Cardiac septum (tissue), 1 donor: ENCODE measurements at regions of chr1 and their contacts with region 1.

Region 1: GRCh38 chr1:230066466-230067404 is at the start of gene GALNT2:
- DNase-seq: peak; percentile 93
- total RNA-seq, gene GALNT2: 29.3 TPM

Region 2: GRCh38 chr1:229661022-229661877 is 405.5 kb before region 1 on chr1:
- intact Hi-C with region 1: loop called (anchors 10 kb)
- DNase-seq: peak; percentile 91

Region 3: DNA sequence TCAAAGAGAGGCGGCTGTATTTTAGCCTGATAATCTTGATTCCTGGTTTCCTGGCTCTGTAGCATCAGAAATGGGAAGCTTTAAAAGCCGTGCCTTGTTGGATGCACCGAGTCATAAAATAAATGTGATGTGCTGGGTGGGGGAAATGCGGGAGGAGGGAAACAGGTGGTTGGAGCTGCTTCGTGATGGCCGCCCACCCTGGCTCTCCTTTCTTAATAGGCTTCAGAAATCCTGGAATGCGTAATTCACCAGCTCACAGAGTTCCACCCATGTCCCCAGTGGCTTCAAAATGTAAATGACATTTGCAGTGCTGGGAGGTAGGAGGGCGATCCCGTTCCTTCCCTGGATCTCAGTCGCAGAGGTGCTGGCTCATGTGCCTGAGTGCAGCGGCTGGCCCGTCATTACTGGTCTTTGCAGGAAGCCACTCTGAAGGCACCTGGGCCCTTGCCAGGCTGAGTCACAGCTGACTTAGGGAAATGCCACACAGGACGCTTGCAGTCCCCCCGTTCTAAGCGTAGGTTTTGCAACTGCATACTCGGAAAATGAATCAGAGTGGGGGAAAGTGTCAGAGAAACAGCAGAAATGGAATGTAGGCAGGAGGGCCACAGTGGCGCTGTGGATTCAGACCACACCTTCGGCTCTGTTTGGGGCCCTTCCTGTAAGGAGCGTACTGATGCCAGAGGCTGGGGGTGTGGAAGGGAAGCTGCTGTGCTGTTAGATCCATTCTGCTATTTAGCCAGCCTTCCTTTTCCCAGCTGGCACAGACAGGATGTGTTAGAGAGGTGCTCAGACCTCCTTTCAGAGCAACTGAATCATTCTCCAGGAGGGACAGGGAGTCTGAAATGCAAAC is 37.9 kb after region 1 on chr1:
- intact Hi-C with region 1: loop called (anchors 5 kb)
- DNase-seq: peak; percentile 96

Region 4: DNA sequence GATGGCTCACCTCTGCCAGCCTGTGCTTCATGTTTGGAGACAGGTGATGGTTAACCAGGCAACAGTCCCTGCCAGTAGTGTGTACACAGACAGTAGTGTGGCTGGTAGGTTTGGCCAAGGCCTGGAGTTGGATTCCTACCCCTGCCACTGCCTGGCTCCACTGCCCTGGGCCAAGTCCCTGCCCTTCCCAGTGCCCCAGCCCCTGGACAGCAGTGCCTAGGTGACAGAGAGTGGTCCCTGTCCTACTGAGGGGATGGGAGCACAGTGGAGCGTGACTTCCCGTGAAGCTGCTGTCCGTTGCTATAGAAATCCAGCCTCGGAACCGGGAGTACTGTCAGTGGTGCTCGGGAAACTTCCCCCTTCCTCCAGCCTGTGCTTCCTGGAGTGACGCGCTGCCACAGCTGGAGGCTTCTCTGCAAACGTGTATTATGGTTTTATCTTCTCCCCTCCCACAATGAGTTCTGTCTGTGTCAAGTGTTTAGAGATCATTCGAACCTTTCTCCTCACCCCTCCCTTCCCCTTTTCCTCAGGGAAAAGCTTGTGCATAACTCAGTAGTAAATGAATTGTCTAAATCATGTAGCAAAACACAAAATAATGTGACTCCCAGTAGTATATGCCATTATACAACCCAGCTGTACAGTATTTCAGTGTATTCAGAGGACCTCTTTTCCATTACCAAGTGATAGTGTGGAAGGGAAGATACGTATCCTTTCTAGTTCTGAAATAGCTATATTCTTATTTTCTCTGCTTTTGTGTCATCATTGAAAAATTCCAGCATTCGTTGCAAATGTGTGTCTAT is 73.7 kb after region 1 on chr1:
- intact Hi-C with region 1: no loop called
- DNase-seq: no peak

Region 5: DNA sequence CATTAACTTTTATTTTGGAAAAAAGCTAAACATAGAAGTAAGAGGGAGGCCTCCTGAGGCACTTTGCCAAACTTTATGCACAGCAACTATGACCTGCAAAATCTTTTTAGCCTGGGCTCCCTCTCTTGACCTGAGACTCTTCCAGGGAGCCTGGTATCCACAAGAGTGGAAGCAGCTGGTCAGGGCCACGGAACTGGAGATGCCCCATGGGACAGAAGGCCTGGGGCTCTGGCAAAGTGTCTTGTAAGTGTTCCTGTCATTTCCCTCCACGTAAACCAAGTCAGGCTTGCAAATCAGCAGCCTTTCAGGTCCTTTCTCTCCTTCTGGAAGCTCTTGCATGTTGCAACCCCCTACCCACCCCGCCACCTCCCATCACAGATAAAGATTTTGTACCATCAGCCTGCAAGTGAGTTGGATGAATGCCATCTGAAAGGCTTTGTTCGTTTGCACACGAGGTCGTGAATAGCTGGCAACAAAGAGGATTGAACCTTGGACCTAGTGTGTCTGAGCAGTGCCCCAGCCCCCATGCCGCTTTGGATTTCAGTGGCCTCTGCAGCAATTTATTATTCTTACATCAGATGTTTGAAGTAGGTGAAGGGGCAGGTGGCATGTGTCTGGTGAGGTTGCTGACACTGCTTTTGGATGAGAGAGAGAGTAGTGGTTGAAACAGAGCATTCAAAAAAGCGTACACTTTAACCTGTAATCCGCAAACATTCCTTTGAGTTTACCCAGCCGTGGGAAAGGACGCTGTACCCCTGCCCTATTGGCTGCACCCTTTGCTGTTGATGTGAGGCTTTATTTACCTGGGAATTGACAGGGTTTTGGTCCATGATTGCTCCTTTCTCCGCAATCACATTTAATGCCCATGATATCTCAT is 91.9 kb after region 1 on chr1:
- intact Hi-C with region 1: loop called (anchors 5 kb)
- DNase-seq: no peak

Region 6: GRCh38 chr1:230215031-230215430 is 148.3 kb after region 1 on chr1:
- intact Hi-C with region 1: loop called (anchors 2 kb)
- DNase-seq: no peak

Region 7: GRCh38 chr1:230317823-230318819 is 251.4 kb after region 1 on chr1:
- intact Hi-C with region 1: no loop called
- DNase-seq: peak; percentile 60